ENCODE measurements at regions of chr7 and their contacts with region 1.

Region 1: GRCh38 chr7:151448261-151449252 is 8.6 kb upstream of the CRYGN start:
- DNase-seq: peak; percentile 64 to 85 (median 79)
- H3K4me3 ChIP-seq: peak overlapping the region; percentile 62
- H3K4me3 Mint-ChIP-seq: peak overlapping the region; percentile 60 to 91 (median 83)
- H3K27ac ChIP-seq: no peak overlapping the region
- H3K27ac Mint-ChIP-seq: peak overlapping the region in 6 of 8 donors; percentile 34 to 88 (median 62)
- H3K4me1 ChIP-seq: peaks cover 7% of the 10 kb centered on the region
- H3K4me1 Mint-ChIP-seq: peaks cover 3 to 4% (median 4%) of the 10 kb centered on the region in 3 donors
- H3K27me3 ChIP-seq: no peaks in the 10 kb centered on the region
- H3K27me3 Mint-ChIP-seq: peaks cover 4 to 8% of the 10 kb centered on the region in 2 donors

Region 2: DNA sequence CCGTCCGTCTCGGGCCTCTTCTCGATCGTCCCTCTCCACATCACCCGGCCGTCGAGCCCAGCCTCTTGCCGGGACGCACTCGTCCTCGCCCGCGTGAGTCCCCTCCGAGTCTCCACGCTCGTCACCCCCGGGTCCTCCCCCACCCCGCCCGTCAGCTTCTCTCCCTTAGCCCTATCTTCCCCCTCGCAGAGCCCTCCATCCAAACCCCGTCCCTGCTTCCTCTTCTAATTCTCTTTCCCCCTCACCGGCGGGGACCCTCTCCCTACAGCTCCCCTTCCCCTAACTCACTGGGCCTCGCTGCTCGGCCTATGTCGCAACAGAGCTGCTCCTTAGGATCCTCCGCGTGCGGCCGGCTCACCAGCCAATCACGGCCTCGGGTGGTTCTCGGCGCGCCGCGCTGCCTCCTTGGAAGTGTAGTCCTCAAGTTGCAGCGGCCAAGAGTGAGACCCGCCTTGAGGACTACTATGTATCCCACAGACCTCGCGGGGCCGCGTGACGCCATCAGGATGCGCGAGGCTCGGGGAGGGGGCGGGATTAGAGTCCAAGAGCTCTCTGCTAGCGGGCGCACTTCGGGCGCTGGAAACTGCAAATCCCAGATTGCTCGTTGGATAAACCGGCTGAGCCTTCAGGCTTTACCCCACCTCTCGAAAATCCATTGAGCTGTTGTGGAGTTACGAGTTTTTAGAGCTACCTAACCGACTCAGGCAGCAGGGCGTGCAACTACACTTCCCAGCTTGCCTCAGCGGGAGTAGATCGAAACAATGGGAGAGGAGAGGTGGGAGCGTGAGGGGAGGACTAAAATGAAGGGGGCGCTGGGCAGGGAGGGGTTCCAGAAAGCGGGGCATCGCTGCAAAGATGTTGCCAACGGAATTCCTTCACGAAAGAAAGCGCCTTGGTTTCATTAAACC is 221.4 kb before region 1 on chr7 and contains the start of gene ABCF2:
- CTCF ChIA-PET with region 1: no interaction called
- POLR2A ChIA-PET with region 1: no interaction called
- DNase-seq: peak; percentile 94 to 98 (median 97)
- H3K4me3 ChIP-seq: peak within 1 kb of the TSS; percentile 99
- H3K4me3 Mint-ChIP-seq: peak within 1 kb of the TSS; percentile 87 to 100 (median 99)
- H3K27ac ChIP-seq: peak within 1 kb of the TSS; percentile 77
- H3K27ac Mint-ChIP-seq: peak within 1 kb of the TSS; percentile 89 to 99 (median 98)
- H3K4me1 ChIP-seq: peaks cover 34% of the 10 kb centered on the region
- H3K4me1 Mint-ChIP-seq: peaks cover 42 to 53% (median 52%) of the 10 kb centered on the region in 3 donors
- H3K27me3 ChIP-seq: no peaks in the 10 kb centered on the region
- H3K27me3 Mint-ChIP-seq: no peaks in the 10 kb centered on the region
- total RNA-seq, gene ABCF2: 86.5 to 95.1 TPM

Region 3: DNA sequence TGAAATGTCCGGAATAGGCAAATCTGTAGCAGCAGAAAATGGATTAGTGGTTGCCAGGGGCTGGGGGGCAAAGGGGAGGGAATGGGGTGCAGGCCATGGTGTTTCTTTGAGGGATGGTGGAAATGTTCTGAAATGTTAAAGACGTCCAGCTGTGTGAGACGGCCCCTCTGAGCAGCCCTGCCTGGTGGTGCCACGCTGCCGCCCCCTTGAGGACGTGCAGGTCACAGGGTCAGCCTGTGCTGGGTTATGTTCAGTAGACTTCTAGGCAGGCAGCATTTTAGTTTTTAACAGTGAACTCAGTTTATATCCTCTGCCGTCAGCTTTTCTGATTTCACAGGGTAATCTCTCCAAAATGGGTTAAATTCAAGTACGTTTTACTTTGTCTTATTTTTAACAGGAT is 97.5 kb before region 1 on chr7:
- CTCF ChIA-PET with region 1: interaction called, 43 read pairs
- POLR2A ChIA-PET with region 1: no interaction called
- DNase-seq: peak in 2 of 5 donors; percentile 13 to 20
- H3K4me3 ChIP-seq: no peak overlapping the region
- H3K4me3 Mint-ChIP-seq: peak overlapping the region in 6 of 7 donors; percentile 45 to 87 (median 74)
- H3K27ac ChIP-seq: peak overlapping the region; percentile 43
- H3K27ac Mint-ChIP-seq: peak overlapping the region; percentile 95 to 99 (median 96)
- H3K4me1 ChIP-seq: peaks cover 39% of the 10 kb centered on the region
- H3K4me1 Mint-ChIP-seq: peaks cover 38 to 73% (median 48%) of the 10 kb centered on the region in 3 donors
- H3K27me3 ChIP-seq: no peaks in the 10 kb centered on the region
- H3K27me3 Mint-ChIP-seq: peaks cover 0 to 2% of the 10 kb centered on the region in 2 donors

Region 4: GRCh38 chr7:151368136-151368571 is 80.4 kb before region 1 on chr7:
- CTCF ChIA-PET with region 1: interaction called, 138 read pairs
- POLR2A ChIA-PET with region 1: interaction called, 3 read pairs
- DNase-seq: peak; percentile 62 to 81 (median 72)
- H3K4me3 ChIP-seq: no peak overlapping the region
- H3K4me3 Mint-ChIP-seq: no peak overlapping the region
- H3K27ac ChIP-seq: no peak overlapping the region
- H3K27ac Mint-ChIP-seq: peak overlapping the region in 7 of 8 donors; percentile 56 to 83 (median 78)
- H3K4me1 ChIP-seq: peaks cover 9% of the 10 kb centered on the region
- H3K4me1 Mint-ChIP-seq: peaks cover 10 to 21% (median 14%) of the 10 kb centered on the region in 3 donors
- H3K27me3 ChIP-seq: no peaks in the 10 kb centered on the region
- H3K27me3 Mint-ChIP-seq: no peaks in the 10 kb centered on the region

Region 5: GRCh38 chr7:151426486-151426905 is 22.1 kb before region 1 on chr7:
- CTCF ChIA-PET with region 1: interaction called, 17 read pairs
- POLR2A ChIA-PET with region 1: no interaction called
- DNase-seq: no peak
- H3K4me3 ChIP-seq: no peak overlapping the region
- H3K4me3 Mint-ChIP-seq: no peak overlapping the region
- H3K27ac ChIP-seq: no peak overlapping the region
- H3K27ac Mint-ChIP-seq: peak overlapping the region in 2 of 8 donors; percentile 47 to 69
- H3K4me1 ChIP-seq: peaks cover 51% of the 10 kb centered on the region
- H3K4me1 Mint-ChIP-seq: peaks cover 31 to 40% (median 33%) of the 10 kb centered on the region in 3 donors
- H3K27me3 ChIP-seq: no peaks in the 10 kb centered on the region
- H3K27me3 Mint-ChIP-seq: peaks cover 0 to 7% of the 10 kb centered on the region in 2 donors

Region 6: DNA sequence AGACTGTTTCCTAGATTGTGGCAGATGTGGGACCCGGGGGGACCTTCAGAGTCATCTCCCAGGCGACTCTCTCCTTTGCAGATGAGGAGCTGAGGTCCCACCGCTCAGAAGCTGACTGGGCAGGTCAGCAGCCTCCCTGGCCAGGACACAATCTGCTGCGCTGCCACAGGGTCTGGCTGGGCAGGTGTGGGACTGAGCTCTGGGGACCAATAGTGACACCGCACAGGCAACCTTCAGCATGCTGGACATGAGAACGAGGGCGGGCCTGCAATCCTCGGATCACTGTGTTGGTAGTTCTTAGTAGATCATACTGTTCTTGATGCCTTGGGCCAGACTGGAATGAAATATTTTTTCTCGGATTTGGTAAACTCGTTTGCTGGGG is 11.9 kb after region 1 on chr7:
- CTCF ChIA-PET with region 1: interaction called, 12 read pairs
- POLR2A ChIA-PET with region 1: no interaction called
- DNase-seq: no peak
- H3K4me3 ChIP-seq: no peak overlapping the region
- H3K4me3 Mint-ChIP-seq: no peak overlapping the region
- H3K27ac ChIP-seq: no peak overlapping the region
- H3K27ac Mint-ChIP-seq: no peak overlapping the region
- H3K4me1 ChIP-seq: no peaks in the 10 kb centered on the region
- H3K4me1 Mint-ChIP-seq: peaks cover 0 to 7% (median 2%) of the 10 kb centered on the region in 3 donors
- H3K27me3 ChIP-seq: no peaks in the 10 kb centered on the region
- H3K27me3 Mint-ChIP-seq: peaks cover 5 to 7% of the 10 kb centered on the region in 2 donors

Region 7: DNA sequence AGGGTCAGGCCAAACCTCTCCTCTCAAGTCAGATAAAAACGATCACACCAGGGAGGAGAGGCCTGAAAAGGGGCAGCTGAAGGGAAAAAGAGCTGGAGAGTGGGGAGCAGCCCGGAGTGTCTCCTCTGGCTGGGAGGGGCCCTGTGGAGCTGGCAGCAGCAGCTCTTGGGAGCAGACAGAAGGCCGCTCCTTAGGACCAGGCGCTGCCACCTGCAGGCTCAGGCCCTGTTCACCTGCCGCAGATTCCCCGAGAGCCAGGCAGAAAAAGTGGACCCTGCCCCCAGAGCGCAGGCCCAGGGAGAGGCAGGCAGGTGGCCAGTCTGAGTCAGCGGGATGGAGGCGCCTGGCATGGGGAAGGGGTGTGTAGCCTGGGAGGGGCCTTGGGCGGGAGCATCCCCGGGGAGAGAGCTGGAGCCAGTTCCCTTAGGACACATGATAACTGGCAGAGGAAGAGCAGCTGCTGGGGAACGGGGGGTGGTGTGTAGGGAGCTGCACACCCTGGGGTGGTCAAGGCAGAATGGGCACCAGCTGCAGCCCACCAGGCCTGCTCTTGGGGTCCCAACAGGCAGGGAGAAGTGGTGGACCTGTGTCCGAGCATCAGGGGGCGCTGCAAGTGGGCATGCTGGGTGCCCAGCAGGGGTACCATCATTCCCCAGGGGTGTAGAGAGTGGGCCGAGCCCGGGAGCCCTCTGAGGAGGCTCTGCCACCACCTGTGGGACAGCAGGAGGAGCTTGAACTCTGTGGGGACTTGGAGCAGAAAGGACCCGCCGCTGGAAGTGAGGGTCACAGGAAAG is 248.4 kb after region 1 on chr7:
- CTCF ChIA-PET with region 1: no interaction called
- POLR2A ChIA-PET with region 1: no interaction called
- DNase-seq: no peak
- H3K4me3 ChIP-seq: no peak overlapping the region
- H3K4me3 Mint-ChIP-seq: no peak overlapping the region
- H3K27ac ChIP-seq: no peak overlapping the region
- H3K27ac Mint-ChIP-seq: peak overlapping the region in 1 of 8 donors; percentile 47
- H3K4me1 ChIP-seq: no peaks in the 10 kb centered on the region
- H3K4me1 Mint-ChIP-seq: peaks cover 5 to 12% (median 9%) of the 10 kb centered on the region in 3 donors
- H3K27me3 ChIP-seq: no peaks in the 10 kb centered on the region
- H3K27me3 Mint-ChIP-seq: no peaks in the 10 kb centered on the region

Region 8: GRCh38 chr7:151759591-151760042 is 311.1 kb after region 1 on chr7:
- CTCF ChIA-PET with region 1: interaction called, 15 read pairs
- POLR2A ChIA-PET with region 1: no interaction called
- DNase-seq: peak; percentile 21 to 71 (median 47)
- H3K4me3 ChIP-seq: no peak overlapping the region
- H3K4me3 Mint-ChIP-seq: no peak overlapping the region
- H3K27ac ChIP-seq: no peak overlapping the region
- H3K27ac Mint-ChIP-seq: peak overlapping the region in 4 of 8 donors; percentile 10 to 81 (median 31)
- H3K4me1 ChIP-seq: peaks cover 28% of the 10 kb centered on the region
- H3K4me1 Mint-ChIP-seq: peaks cover 22 to 36% (median 28%) of the 10 kb centered on the region in 3 donors
- H3K27me3 ChIP-seq: no peaks in the 10 kb centered on the region
- H3K27me3 Mint-ChIP-seq: peaks cover 0 to 4% of the 10 kb centered on the region in 2 donors

Measured in CD8-positive, alpha-beta memory T cell (primary cell).